ENCODE measurements at regions of chr5 and their contacts with region 1.

Region 1: DNA sequence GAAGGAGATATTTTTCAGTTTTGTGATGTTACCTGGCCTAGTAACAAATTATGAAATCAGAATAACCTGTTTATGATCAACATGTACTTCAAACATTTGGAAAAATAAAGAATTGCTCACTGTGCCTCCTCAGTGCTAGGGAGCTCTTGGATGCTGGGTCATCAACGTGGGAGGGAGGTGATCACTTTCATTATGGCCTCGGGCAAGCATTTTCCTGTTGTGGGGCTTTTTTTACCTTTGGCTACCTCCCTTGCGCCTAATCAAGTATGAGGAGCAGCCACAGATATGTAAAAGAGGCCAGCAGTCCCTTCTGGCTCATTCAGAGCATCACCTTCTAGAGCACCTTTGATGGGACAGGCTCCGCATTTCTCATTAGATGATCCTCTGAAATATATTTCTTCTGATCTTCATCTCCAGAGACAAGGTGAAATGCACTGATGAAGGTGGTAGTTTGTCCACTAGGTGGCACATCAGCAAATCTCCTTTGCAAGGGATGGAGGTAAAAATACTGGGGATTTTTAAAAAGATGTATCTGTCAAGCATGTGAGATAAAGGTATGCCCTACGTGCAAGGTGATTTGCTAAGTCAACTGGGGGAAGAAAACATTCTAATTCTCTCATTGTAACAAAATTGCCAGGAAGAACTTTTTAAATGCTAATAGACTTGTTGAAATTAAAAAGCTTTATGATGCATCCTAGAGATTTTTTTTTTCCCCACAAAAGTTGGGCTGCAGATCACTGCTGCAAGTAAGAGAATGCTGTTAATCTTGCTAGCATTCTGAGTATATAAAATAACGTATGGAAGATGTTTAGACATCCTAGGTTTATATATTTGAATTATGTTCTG is 218.2 kb downstream of the MAST4 start:
- DNase-seq: peak; percentile 42 to 52 (median 48)
- ATAC-seq: peak; percentile 77
- H3K4me3 ChIP-seq: no peak overlapping the region
- H3K27ac ChIP-seq: no peak overlapping the region
- H3K4me1 ChIP-seq: no peaks in the 10 kb centered on the region
- H3K27me3 ChIP-seq: peaks cover 0 to 6% of the 10 kb centered on the region in 2 experiments; a peak in 2 of 5 replicates
- CTCF ChIP-seq: peak; percentile 46 to 67 (median 63); a peak in 5 of 6 replicates
- EP300 ChIP-seq: no peak
- POLR2A ChIP-seq: no peak
- RAD21 ChIP-seq: peak; percentile 50 to 60

Region 2: DNA sequence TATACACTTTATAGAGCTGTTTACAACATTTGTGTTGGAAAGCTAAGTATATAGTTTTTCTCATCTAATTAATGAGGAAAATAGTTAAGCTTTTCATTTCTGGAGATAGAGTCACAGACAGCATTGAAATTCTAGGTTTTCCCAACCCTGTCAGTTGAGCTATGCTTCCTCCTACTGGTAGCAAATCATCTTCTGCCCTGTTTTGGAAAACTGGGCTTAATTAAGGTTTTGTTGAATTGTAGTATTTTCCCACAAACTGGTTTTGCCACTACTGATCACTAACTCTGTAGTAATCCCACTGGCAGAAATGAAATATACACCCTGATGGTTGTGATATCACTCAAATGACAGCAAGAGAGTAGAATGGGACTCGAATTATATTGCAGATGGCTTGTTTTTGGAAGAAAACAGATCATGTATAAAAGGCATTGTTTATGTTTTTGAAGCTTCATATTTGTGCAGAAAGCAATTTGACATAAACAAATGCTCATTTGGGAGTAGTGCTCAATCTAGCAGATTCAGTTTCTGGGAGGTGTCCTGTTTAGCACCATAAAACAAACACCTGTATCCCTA is 335.7 kb after region 1 on chr5:
- CTCF ChIA-PET with region 1: interaction called, 8 read pairs
- POLR2A ChIA-PET with region 1: no interaction called
- in situ Hi-C with region 1: no loop called
- intact Hi-C with region 1: loop called (anchors 5 kb)
- DNase-seq: peak in 1 of 4 experiments; percentile 9
- ATAC-seq: peak; percentile 62; the same call in 1 of the 3 replicates
- H3K4me3 ChIP-seq: no peak overlapping the region
- H3K27ac ChIP-seq: no peak overlapping the region
- H3K4me1 ChIP-seq: peaks cover 0 to 6% of the 10 kb centered on the region in 2 experiments; a peak in 2 of 5 replicates
- H3K27me3 ChIP-seq: no peaks in the 10 kb centered on the region
- CTCF ChIP-seq: peak; percentile 6 to 65 (median 34); a peak in 3 of 6 replicates
- EP300 ChIP-seq: no peak
- POLR2A ChIP-seq: no peak
- RAD21 ChIP-seq: peak; percentile 43 to 64; a peak in 3 of 4 replicates

Measured in K562 (cell line).